Ovary (tissue), 10 donors: ENCODE measurements at regions of chr4 and their contacts with region 1.

Region 1: GRCh38 chr4:118772081-118772766 is 63.7 kb downstream of the SEC24D start:
- DNase-seq: no peak
- H3K4me3 ChIP-seq: no peak overlapping the region
- H3K27ac ChIP-seq: peak overlapping the region in 1 of 2 donors; percentile 53
- H3K4me1 ChIP-seq: peaks cover 8% of the 10 kb centered on the region
- H3K27me3 ChIP-seq: no peaks in the 10 kb centered on the region
- CTCF ChIP-seq: peak in 2 of 3 donors; percentile 59 to 68
- EP300 ChIP-seq: no peak
- POLR2A ChIP-seq: no peak

Region 2: GRCh38 chr4:118224239-118224829 is 547.9 kb before region 1 on chr4:
- intact Hi-C with region 1: no loop called
- DNase-seq: no peak
- H3K4me3 ChIP-seq: no peak overlapping the region
- H3K27ac ChIP-seq: no peak overlapping the region
- H3K4me1 ChIP-seq: no peaks in the 10 kb centered on the region
- H3K27me3 ChIP-seq: no peaks in the 10 kb centered on the region
- CTCF ChIP-seq: peak in 2 of 3 donors; percentile 22 to 36
- EP300 ChIP-seq: no peak
- POLR2A ChIP-seq: no peak

Region 3: DNA sequence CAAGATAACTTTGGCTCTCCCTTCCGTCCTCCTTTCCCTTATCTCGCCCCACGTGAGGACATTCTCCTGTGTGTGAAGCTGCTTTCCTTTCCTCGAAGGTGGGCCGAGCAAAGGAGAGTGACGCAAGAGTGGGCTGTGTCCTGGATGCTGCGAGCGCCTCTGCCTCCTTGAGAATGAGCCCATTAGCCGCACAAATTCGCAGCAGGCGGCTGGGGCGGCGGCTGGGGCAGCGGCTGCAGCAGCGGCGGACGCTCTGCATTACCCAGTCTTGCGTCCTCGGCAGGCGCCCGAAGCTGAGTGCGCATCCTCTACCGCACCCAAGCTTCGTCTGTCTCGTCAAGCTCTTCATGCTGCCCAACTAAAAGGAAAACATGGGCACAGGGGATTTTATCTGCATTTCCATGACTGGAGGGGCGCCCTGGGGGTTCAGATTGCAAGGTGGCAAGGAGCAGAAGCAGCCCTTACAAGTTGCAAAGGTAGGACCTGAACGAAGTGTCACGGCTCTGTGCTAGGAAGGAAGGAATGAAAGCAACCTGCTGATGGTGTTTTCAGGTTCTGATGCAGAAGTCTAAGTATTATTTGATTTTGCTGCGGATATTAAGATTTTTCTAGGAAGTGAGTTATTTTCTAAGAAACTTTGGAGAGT is 116.6 kb after region 1 on chr4 and contains the start of gene SYNPO2:
- intact Hi-C with region 1: loop called in 3 of 4 experiments (anchors 10 kb)
- DNase-seq: peak; percentile 91 to 94 (median 92)
- H3K4me3 ChIP-seq: peak within 1 kb of the TSS; percentile 66
- H3K27ac ChIP-seq: peak within 1 kb of the TSS; percentile 16 to 71
- H3K4me1 ChIP-seq: peaks cover 1% of the 10 kb centered on the region
- H3K27me3 ChIP-seq: no peaks in the 10 kb centered on the region
- CTCF ChIP-seq: no peak
- EP300 ChIP-seq: no peak
- POLR2A ChIP-seq: peak; percentile 92
- total RNA-seq, gene SYNPO2: 61.9 to 265 (median 165) TPM

Region 4: GRCh38 chr4:118974758-118975157 is 202.5 kb after region 1 on chr4:
- intact Hi-C with region 1: loop called in 3 of 4 experiments (anchors 5 kb)
- DNase-seq: no peak
- H3K4me3 ChIP-seq: no peak overlapping the region
- H3K27ac ChIP-seq: no peak overlapping the region
- H3K4me1 ChIP-seq: peaks cover 18% of the 10 kb centered on the region
- H3K27me3 ChIP-seq: no peaks in the 10 kb centered on the region
- CTCF ChIP-seq: no peak
- EP300 ChIP-seq: no peak
- POLR2A ChIP-seq: no peak